ENCODE measurements at regions of chr1 and their contacts with region 1.

Region 1: DNA sequence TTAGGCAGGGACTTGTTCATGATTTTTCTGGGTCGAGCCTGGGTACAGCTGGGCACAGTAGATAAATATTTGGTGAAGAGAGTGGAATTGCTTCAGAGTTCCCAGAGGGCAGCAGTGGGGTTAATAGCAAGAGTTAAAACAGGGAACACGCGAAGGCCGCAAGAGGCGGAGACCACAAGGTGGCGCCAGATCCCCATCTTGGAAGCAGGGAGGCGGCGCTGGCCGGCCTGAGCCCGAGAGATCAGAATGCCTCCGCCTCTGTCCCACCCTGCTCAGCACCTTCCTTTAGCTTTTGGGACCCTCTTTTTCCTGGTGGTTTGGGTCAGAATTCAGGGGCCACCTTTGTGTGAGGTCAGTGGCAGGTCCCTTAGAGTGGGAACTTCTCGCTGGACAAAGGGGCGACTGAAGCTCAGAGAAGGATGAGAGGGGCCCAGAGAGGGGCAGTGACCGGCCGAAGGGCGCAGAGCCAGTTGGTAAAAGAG is 6.5 kb upstream of the PADI2 start:
- DNase-seq: peak; percentile 90
- H3K4me3 Mint-ChIP-seq: no peak overlapping the region
- H3K27ac Mint-ChIP-seq: no peak overlapping the region
- H3K4me1 Mint-ChIP-seq: peaks cover 3% of the 10 kb centered on the region
- H3K27me3 Mint-ChIP-seq: peaks cover 8% of the 10 kb centered on the region

Region 2: GRCh38 chr1:17176306-17177061 is 50.7 kb after region 1 on chr1:
- CTCF ChIA-PET with region 1: interaction called, 4 read pairs
- intact Hi-C with region 1: loop called (anchors 5 kb)
- DNase-seq: no peak
- H3K4me3 Mint-ChIP-seq: no peak overlapping the region
- H3K27ac Mint-ChIP-seq: no peak overlapping the region
- H3K4me1 Mint-ChIP-seq: peaks cover 13% of the 10 kb centered on the region
- H3K27me3 Mint-ChIP-seq: no peaks in the 10 kb centered on the region

Region 3: DNA sequence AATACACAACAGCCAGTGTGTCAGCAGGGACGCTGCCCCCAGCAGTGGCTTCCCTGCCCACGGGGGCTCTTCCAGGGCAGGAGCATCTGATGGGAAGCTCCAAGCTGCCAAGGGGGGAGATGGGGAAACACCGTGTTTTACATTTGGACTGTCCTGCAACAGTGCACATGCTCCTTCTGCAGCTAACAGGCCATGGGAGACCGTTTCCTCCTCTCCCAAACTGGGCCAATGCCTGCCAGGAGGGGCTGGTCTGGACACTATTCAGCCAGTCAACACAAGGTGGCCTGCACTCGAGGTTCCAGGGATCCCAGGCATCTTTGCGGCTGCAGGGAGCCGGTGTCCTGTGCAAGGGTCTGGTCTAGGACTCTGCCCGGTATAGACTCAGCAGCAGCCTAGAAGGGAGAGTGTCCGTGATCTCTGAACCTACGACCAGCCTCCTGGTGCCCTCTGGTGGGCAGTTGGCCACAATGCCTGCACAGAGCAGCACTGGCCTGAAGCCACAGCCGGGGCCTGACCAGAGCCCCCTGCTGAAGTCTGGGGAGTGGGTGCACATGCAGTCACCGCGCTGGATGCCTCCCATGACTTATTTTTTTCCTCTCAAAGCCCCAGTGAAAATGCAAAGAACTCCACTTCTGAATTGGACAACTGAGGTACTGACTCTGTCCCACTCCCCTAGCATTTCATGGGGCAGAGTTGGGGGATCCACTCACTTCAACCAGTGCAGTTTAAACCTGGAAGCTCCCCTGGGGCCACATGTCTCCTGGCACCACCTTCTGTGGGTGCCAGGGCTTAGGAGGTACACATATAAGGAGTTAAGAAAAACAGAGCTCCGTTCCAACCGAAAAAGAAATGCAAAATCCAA is 280.3 kb after region 1 on chr1:
- CTCF ChIA-PET with region 1: no interaction called
- intact Hi-C with region 1: loop called (anchors 1 kb)
- DNase-seq: peak; percentile 67
- H3K4me3 Mint-ChIP-seq: no peak overlapping the region
- H3K27ac Mint-ChIP-seq: no peak overlapping the region
- H3K4me1 Mint-ChIP-seq: peaks cover 2% of the 10 kb centered on the region
- H3K27me3 Mint-ChIP-seq: no peaks in the 10 kb centered on the region